ENCODE measurements at regions of chr19 and their contacts with region 1.

Region 1: DNA sequence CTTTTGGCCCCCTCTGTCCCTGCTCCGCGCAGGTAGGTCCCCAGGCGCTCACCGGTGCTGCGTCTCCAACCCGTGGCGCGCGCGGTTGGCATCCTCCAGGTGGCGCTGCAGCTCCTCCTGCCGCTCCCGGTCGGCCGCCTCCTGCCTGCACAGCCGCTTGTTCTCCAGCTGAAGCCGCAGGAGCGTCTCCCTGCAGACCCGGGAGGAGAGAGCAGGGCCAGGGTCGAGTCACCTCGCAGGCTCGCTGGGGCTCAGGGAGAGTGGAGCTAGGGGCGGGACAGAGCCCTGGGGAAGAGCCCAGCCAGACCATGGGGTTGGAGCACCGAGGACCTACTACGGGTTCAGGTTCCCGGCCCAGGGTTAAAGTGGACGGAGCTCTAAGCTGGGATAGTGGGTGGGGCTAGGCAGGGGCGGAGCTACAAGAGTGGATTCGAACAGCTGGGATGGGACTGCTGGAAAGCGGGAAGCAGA is 9.3 kb downstream of the HOOK2 start:
- DNase-seq: peak; percentile 71 to 83 (median 74)
- H3K4me3 ChIP-seq: peak overlapping the region; percentile 7 to 81 (median 39)
- H3K4me3 Mint-ChIP-seq: peak overlapping the region in 1 of 2 donors; percentile 78
- H3K27ac ChIP-seq: no peak overlapping the region
- H3K27ac Mint-ChIP-seq: peak overlapping the region in 2 of 7 donors; percentile 30 to 70
- H3K4me1 ChIP-seq: peaks cover 0 to 6% of the 10 kb centered on the region in 2 donors
- H3K4me1 Mint-ChIP-seq: peaks cover 8% of the 10 kb centered on the region
- H3K27me3 ChIP-seq: no peaks in the 10 kb centered on the region
- H3K27me3 Mint-ChIP-seq: peaks cover 0 to 2% (median 0%) of the 10 kb centered on the region in 3 donors
- CTCF ChIP-seq: peak; percentile 96

Region 2: GRCh38 chr19:12847159-12848139 is 81.4 kb after region 1 on chr19:
- intact Hi-C with region 1: loop called (anchors 2 to 5 kb)
- DNase-seq: peak; percentile 84 to 94 (median 86)
- H3K4me3 ChIP-seq: peak overlapping the region in 1 of 3 experiments; percentile 42
- H3K4me3 Mint-ChIP-seq: peak overlapping the region; percentile 45 to 81
- H3K27ac ChIP-seq: no peak overlapping the region
- H3K27ac Mint-ChIP-seq: peak overlapping the region in 4 of 7 donors; percentile 13 to 78 (median 55)
- H3K4me1 ChIP-seq: peaks cover 11 to 12% of the 10 kb centered on the region in 2 donors
- H3K4me1 Mint-ChIP-seq: peaks cover 9% of the 10 kb centered on the region
- H3K27me3 ChIP-seq: peaks cover 0 to 25% of the 10 kb centered on the region in 2 donors
- H3K27me3 Mint-ChIP-seq: peaks cover 30 to 53% (median 32%) of the 10 kb centered on the region in 3 donors
- CTCF ChIP-seq: peak; percentile 99